ENCODE measurements at regions of chr16 and their contacts with region 1.

Region 1: GRCh38 chr16:30874821-30875717 is 18.8 kb downstream of the BCL7C start:
- DNase-seq: peak; percentile 78 to 95 (median 89)
- ATAC-seq: peak; percentile 78
- H3K4me3 ChIP-seq: peak overlapping the region; percentile 87 to 97
- H3K4me3 Mint-ChIP-seq: peak overlapping the region; percentile 90
- H3K27ac ChIP-seq: peak overlapping the region; percentile 84 to 94
- H3K27ac Mint-ChIP-seq: peak overlapping the region; percentile 96
- H3K4me1 ChIP-seq: peaks cover 24% of the 10 kb centered on the region
- H3K4me1 Mint-ChIP-seq: peaks cover 29% of the 10 kb centered on the region
- H3K27me3 ChIP-seq: no peaks in the 10 kb centered on the region
- H3K27me3 Mint-ChIP-seq: no peaks in the 10 kb centered on the region
- CTCF ChIP-seq: no peak

Region 2: GRCh38 chr16:30805370-30806169 is 69.5 kb before region 1 on chr16:
- CTCF ChIA-PET with region 1: no interaction called
- POLR2A ChIA-PET with region 1: interaction called, 10 read pairs
- intact Hi-C with region 1: loop called (anchors 1 kb)
- DNase-seq: peak in 8 of 9 experiments; percentile 39 to 80 (median 64)
- ATAC-seq: peak; percentile 86
- H3K4me3 ChIP-seq: peak overlapping the region; percentile 75 to 89
- H3K4me3 Mint-ChIP-seq: peak overlapping the region; percentile 83
- H3K27ac ChIP-seq: peak overlapping the region; percentile 36 to 48
- H3K27ac Mint-ChIP-seq: peak overlapping the region; percentile 55
- H3K4me1 ChIP-seq: peaks cover 16% of the 10 kb centered on the region
- H3K4me1 Mint-ChIP-seq: peaks cover 21% of the 10 kb centered on the region
- H3K27me3 ChIP-seq: no peaks in the 10 kb centered on the region
- H3K27me3 Mint-ChIP-seq: no peaks in the 10 kb centered on the region
- CTCF ChIP-seq: no peak

Region 3: DNA sequence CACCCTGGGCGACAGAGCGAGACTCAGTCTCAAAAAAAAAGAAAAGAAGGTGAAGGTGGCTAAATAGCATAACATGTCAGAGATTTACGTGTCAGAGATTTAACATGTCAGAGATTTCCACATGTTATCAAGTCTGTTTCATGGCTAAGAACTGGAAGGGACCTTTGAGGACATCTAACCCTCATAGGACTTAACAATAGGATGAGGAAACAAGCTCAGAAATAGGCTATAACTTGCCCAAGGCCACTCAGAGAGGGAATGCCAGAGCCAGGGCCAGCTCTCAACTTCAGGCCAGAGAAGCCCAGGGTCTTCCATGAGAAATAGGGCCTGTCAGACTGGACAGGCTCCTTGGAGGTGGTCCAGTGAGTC is 61.3 kb before region 1 on chr16:
- CTCF ChIA-PET with region 1: no interaction called
- POLR2A ChIA-PET with region 1: interaction called, 3 read pairs
- intact Hi-C with region 1: loop called (anchors 1 kb)
- DNase-seq: no peak
- ATAC-seq: peak; percentile 2
- H3K4me3 ChIP-seq: peak overlapping the region; percentile 49 to 56
- H3K4me3 Mint-ChIP-seq: peak overlapping the region; percentile 82
- H3K27ac ChIP-seq: peak overlapping the region; percentile 72
- H3K27ac Mint-ChIP-seq: peak overlapping the region; percentile 88
- H3K4me1 ChIP-seq: peaks cover 18% of the 10 kb centered on the region
- H3K4me1 Mint-ChIP-seq: peaks cover 9% of the 10 kb centered on the region
- H3K27me3 ChIP-seq: no peaks in the 10 kb centered on the region
- H3K27me3 Mint-ChIP-seq: no peaks in the 10 kb centered on the region
- CTCF ChIP-seq: no peak

Region 4: GRCh38 chr16:30893744-30894539 is 18.9 kb after region 1 on chr16 and contains the start of gene BCL7C:
- CTCF ChIA-PET with region 1: interaction called, 3 read pairs
- POLR2A ChIA-PET with region 1: interaction called, 11 read pairs
- intact Hi-C with region 1: loop called (anchors 1 kb)
- DNase-seq: peak; percentile 33 to 88 (median 78)
- ATAC-seq: peak; percentile 73
- H3K4me3 ChIP-seq: peak within 1 kb of the TSS; percentile 72 to 85
- H3K4me3 Mint-ChIP-seq: peak within 1 kb of the TSS; percentile 88
- H3K27ac ChIP-seq: peak within 1 kb of the TSS; percentile 45 to 83
- H3K27ac Mint-ChIP-seq: peak within 1 kb of the TSS; percentile 92
- H3K4me1 ChIP-seq: peaks cover 33% of the 10 kb centered on the region
- H3K4me1 Mint-ChIP-seq: peaks cover 43% of the 10 kb centered on the region
- H3K27me3 ChIP-seq: no peaks in the 10 kb centered on the region
- H3K27me3 Mint-ChIP-seq: no peaks in the 10 kb centered on the region
- CTCF ChIP-seq: no peak
- total RNA-seq, gene BCL7C: 16.0 to 16.2 TPM

Region 5: GRCh38 chr16:30902029-30902972 is 27.2 kb after region 1 on chr16:
- CTCF ChIA-PET with region 1: interaction called, 39 read pairs
- POLR2A ChIA-PET with region 1: interaction called, 69 read pairs
- intact Hi-C with region 1: loop called in 1 of 2 experiments (anchors 1 kb)
- DNase-seq: peak in 8 of 9 experiments; percentile 42 to 82 (median 56)
- ATAC-seq: peak; percentile 81
- H3K4me3 ChIP-seq: peak overlapping the region; percentile 52 to 77
- H3K4me3 Mint-ChIP-seq: peak overlapping the region; percentile 95
- H3K27ac ChIP-seq: peak overlapping the region; percentile 74 to 75
- H3K27ac Mint-ChIP-seq: peak overlapping the region; percentile 97
- H3K4me1 ChIP-seq: peaks cover 33% of the 10 kb centered on the region
- H3K4me1 Mint-ChIP-seq: peaks cover 36% of the 10 kb centered on the region
- H3K27me3 ChIP-seq: no peaks in the 10 kb centered on the region
- H3K27me3 Mint-ChIP-seq: no peaks in the 10 kb centered on the region
- CTCF ChIP-seq: no peak